ENCODE measurements at regions of chr14 and their contacts with region 1.

Region 1: DNA sequence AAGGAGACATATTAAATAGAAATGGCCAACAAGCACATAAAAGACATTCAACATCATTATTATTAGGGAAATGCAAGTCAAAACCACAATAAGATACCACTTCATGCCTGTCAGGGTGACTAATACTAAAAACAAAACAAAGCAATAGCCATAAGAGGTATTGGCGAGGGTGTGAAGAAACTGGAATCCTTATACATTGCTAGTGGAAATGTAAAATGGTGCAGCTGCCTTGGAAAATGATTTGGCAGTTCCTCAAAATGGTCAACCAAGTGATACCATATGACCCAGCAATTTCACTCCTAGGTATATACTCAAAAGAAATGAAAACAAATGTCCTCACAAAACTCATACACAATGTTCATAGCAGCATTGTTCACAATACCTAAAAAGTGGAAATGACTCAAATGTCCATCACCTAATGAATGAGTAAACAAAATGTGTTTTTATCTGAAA is 27.0 kb downstream of the GPR135 start:
- DNase-seq: no peak
- H3K4me3 ChIP-seq: no peak overlapping the region
- H3K27ac ChIP-seq: no peak overlapping the region
- H3K4me1 ChIP-seq: no peaks in the 10 kb centered on the region
- H3K27me3 ChIP-seq: no peaks in the 10 kb centered on the region
- CTCF ChIP-seq: no peak
- POLR2A ChIP-seq: no peak

Region 2: DNA sequence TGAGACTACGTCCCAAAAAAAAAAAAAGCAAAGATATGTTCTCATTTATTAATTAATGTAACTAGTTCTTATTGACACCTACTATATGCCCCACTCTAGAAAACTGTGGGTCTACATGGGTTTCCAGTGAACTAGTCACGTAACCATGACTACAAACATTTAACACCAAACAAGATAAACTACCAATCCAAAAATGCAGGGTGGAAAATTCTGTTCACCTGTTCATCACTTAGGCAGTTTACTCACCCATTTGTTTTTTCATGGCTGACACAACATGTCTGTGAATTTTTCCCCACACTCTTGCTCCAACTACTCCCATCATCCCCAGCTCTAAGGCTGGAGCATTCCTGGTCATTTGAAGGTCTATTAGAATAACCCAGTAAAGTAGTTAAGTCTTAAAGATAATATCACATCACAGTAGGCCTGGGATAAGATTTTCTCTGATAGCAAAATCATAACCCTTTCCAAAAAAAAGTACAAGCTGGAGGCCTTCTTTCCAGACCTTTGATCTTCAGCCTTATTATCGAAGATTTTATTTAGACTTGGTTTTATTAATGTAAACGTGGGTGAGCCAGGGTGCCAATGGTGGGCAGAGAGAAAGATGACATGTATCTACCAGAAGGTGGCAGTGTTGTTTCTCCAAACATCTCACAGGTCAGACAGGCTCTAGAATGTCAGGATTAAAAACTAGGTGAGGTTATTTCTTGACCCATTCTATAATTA is 311.4 kb before region 1 on chr14:
- intact Hi-C with region 1: loop called (anchors 5 kb)
- DNase-seq: peak in 1 of 2 donors; percentile 22
- H3K4me3 ChIP-seq: no peak overlapping the region
- H3K27ac ChIP-seq: no peak overlapping the region
- H3K4me1 ChIP-seq: no peaks in the 10 kb centered on the region
- H3K27me3 ChIP-seq: no peaks in the 10 kb centered on the region
- CTCF ChIP-seq: peak; percentile 57 to 86 (median 78)
- POLR2A ChIP-seq: no peak

Measured in breast epithelium (tissue), 4 donors.